ENCODE measurements at regions of chr3 and their contacts with region 1.

Region 1: DNA sequence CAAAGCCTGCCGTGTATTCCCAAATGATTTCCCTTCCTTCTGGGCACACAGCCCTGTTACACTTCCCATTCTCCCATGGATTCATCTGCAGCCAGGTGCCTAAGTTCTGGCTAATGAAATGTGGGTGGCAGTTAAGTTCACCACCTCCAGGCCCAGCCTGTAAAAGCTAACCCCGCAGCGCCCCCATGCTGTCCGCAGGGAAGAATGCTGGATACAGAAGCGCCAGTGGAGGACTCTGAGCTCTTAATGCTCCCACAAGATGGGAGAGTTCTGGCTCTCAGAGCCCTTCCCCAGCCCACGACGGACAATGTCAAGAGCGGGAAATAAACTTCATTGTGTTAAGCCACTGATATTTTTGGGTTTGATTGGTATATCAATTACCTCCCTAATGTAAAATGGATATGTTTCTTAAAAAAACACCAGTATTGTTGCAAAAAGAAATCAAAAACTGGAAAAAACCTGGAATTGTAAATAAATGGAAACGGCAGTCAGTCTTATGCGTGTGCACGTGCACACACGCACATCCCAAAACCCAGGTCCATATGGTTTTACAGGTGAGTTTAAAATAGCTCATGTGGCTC is 37.7 kb upstream of the FGD5 start:
- DNase-seq: no peak
- H3K4me3 ChIP-seq: no peak overlapping the region
- CTCF ChIP-seq: peak; percentile 56

Region 2: GRCh38 chr3:14791343-14791945 is 10.4 kb after region 1 on chr3:
- CTCF ChIA-PET with region 1: interaction called, 24 read pairs
- POLR2A ChIA-PET with region 1: no interaction called
- DNase-seq: no peak
- H3K4me3 ChIP-seq: no peak overlapping the region
- CTCF ChIP-seq: peak; percentile 68

Region 3: DNA sequence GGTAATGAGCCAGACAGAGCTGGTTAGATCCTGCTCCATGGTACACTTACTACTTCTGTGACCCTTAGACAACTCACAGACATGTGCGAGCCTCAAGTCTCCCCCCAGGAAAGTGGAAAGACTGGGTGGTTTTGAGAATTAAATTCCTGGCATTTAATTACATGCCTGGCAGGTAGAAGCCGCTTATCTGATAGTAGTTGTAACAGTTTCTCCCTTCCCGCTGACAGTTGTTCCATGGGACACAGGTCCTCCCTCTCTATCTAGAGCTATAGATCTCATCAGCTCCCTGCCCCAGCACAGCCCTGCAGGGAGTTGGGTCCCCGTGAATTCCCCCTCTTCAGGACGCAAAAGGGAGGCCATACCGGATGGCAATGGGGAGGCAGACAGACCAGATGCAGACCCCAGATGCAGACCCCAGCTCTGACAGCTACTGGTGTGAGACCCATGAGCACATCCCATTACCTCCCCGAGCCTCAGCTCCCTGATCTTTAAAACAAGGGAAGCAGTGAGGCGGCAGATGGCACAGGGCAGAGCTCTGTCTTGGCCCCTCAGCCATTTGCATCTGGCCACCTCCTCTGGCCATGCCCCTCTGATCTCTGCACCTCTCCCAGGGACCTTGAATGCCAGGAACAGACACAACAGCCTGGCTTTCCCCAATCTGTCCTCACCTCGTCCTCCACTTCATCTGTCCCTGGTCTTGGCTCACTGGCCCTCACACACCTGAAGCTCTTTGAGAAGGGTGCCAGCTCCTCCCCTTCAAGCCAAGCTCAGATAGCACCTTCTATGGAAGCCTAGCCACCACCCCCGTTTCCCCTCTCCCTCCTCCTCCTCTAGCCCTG is 132.3 kb after region 1 on chr3:
- CTCF ChIA-PET with region 1: no interaction called
- POLR2A ChIA-PET with region 1: no interaction called
- DNase-seq: no peak
- H3K4me3 ChIP-seq: no peak overlapping the region
- CTCF ChIP-seq: no peak

Measured in AG04449 (cell line).